Colonic mucosa (tissue), 4 donors: ENCODE measurements at regions of chr17 and their contacts with region 1.

Region 1: GRCh38 chr17:66906321-66907278 is 57.9 kb upstream of the CACNG4 start:
- DNase-seq: peak; percentile 86
- H3K4me3 ChIP-seq: no peak overlapping the region
- H3K27ac ChIP-seq: no peak overlapping the region
- H3K4me1 ChIP-seq: no peaks in the 10 kb centered on the region
- H3K27me3 ChIP-seq: no peaks in the 10 kb centered on the region
- CTCF ChIP-seq: peak; percentile 90

Region 2: DNA sequence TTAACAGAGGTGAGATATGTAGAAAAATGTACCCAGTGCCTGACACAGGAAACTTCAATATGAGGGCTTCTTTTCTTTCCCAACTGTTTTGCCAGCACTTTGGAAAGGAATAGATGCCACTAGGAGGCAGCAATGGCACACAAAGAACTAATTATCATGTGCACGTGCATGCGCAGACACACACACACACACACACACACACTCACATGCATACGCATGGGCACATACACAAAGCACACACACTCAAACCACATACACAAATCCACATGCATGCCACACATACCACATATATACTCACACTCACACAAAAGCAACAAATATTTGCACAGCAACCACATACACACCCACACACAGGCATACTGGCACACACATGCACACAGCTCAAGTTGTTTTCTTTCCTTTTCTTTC is 705.9 kb before region 1 on chr17:
- intact Hi-C with region 1: loop called (anchors 5 kb)
- DNase-seq: peak; percentile 81
- H3K4me3 ChIP-seq: no peak overlapping the region
- H3K27ac ChIP-seq: no peak overlapping the region
- H3K4me1 ChIP-seq: no peaks in the 10 kb centered on the region
- H3K27me3 ChIP-seq: no peaks in the 10 kb centered on the region
- CTCF ChIP-seq: peak; percentile 50

Region 3: DNA sequence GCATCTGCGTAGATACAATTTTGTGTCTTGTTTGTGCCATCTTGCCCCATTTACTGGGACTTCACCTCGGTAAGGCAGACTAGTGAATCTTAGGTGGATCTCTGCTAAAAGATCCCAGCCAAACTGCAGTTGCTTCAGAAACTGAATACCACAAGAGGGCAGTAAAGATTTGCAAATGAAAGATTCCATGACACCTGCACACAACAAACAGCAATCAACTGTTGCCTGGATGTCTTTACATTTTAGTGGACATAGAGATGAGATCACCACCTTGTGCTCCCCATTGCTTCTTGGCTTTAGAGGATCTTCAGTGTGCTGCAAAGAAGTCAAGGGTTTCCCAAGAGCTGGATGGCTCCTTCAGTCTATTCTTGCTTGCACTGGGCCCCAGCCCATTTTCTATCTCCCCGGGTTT is 190.8 kb before region 1 on chr17:
- intact Hi-C with region 1: loop called (anchors 2 kb)
- DNase-seq: peak; percentile 46
- H3K4me3 ChIP-seq: no peak overlapping the region
- H3K27ac ChIP-seq: peak overlapping the region; percentile 81
- H3K4me1 ChIP-seq: peaks cover 10% of the 10 kb centered on the region
- H3K27me3 ChIP-seq: no peaks in the 10 kb centered on the region
- CTCF ChIP-seq: peak; percentile 57